ENCODE measurements at regions of chr16 and their contacts with region 1.

Region 1: DNA sequence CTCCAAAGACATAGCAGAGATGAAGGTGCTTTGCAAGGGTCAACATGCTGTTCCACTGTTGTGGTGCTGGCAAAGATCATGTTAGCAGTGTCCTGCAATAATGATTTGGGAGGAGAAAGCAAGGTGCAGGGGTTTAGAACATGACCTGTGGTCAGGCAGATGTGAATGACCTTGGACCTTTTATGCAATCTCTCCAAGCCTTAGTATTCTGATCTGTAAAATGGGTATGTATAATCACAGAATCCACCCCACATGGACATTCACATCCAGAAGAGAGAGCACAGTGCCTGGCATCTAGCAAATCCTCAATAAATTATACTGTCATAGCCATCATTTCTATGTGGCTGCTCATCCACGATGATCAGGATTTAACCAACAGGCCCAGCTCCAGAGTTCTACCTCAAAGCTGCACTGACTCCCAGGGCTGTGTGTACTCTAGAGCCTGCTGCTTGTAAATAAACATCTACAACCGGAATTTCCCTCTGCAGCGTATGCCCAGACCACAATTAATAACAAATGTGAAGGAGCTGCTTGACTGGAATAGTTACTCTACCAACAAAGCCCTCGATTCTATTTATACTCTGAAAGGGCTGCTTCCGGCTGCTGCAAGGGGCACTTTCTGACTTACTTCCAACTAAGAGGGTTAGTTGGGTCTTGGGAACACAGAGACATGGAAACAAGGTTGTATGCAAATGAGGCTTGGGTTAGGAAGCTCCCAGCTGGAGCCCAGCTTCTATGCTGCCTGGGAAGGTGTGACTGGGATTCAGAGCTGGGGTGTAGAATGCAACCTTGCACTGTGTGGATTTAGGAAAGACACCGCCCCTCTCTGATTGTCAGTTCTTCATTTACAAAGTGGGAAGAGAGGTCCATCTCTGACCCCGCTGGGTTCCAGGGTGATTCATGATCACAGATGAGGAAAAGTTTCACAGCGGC is 265.2 kb downstream of the XYLT1 start:
- DNase-seq: no peak
- H3K4me3 ChIP-seq: no peak overlapping the region
- H3K27ac ChIP-seq: peak overlapping the region in 1 of 8 donors; percentile 5
- H3K4me1 ChIP-seq: peaks cover 0 to 25% (median 0%) of the 10 kb centered on the region in 6 donors
- H3K27me3 ChIP-seq: no peaks in the 10 kb centered on the region
- CTCF ChIP-seq: no peak
- POLR2A ChIP-seq: no peak

Region 2: GRCh38 chr16:17149904-17150483 is 55.6 kb before region 1 on chr16:
- intact Hi-C with region 1: no loop called
- DNase-seq: no peak
- H3K4me3 ChIP-seq: no peak overlapping the region
- H3K27ac ChIP-seq: no peak overlapping the region
- H3K4me1 ChIP-seq: peaks cover 0 to 10% (median 2%) of the 10 kb centered on the region in 6 donors
- H3K27me3 ChIP-seq: no peaks in the 10 kb centered on the region
- CTCF ChIP-seq: no peak
- POLR2A ChIP-seq: no peak

Region 3: DNA sequence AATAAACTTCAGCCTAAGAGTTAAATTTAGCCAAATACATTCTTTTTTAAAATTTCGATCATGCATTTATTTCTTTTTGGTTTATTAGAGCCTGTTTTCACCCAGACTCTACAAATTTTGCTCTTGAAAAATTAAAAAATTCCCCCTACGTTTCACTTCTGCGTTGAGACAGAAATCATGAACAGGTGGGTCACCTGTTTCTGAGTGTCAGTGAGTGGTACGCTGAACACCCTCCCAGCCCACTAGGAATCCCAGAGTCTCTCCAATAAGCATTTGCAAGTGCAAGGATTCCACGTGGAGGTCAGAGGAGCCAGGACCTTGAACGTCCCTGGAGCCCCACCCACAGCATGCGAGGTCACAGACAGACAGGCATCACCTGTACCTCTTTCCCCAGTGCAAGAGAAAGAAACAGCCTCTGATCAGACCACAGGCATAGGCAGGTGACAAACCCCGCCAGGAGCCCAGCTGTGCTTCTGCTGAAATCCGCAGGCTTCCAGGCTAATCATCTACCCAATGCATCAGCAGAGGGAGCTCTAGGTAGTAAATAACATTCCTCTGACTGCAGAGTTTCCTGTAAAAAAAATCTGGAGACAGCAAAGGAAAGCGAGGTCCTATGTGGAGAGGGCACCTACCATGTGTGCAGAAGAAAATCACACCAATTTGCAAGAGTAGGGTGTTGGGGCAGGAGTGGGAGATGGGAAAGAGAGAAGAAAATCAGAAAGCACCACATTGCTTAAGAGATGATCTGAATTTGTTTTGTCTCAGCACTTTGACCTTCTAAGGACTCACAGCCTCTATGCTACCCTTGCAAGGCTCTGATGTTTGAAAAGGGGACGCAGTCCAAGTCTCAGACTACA is 271.1 kb after region 1 on chr16:
- intact Hi-C with region 1: loop called (anchors 10 kb)
- DNase-seq: peak; percentile 83
- H3K4me3 ChIP-seq: no peak overlapping the region
- H3K27ac ChIP-seq: no peak overlapping the region
- H3K4me1 ChIP-seq: peaks cover 4 to 32% (median 24%) of the 10 kb centered on the region in 6 donors
- H3K27me3 ChIP-seq: peaks cover 0 to 20% (median 0%) of the 10 kb centered on the region in 7 donors
- CTCF ChIP-seq: peak in 8 of 11 experiments; percentile 17 to 63 (median 50)
- POLR2A ChIP-seq: no peak